GM10248 (cell line): ENCODE measurements at regions of chr6 and their contacts with region 1.

Region 1: DNA sequence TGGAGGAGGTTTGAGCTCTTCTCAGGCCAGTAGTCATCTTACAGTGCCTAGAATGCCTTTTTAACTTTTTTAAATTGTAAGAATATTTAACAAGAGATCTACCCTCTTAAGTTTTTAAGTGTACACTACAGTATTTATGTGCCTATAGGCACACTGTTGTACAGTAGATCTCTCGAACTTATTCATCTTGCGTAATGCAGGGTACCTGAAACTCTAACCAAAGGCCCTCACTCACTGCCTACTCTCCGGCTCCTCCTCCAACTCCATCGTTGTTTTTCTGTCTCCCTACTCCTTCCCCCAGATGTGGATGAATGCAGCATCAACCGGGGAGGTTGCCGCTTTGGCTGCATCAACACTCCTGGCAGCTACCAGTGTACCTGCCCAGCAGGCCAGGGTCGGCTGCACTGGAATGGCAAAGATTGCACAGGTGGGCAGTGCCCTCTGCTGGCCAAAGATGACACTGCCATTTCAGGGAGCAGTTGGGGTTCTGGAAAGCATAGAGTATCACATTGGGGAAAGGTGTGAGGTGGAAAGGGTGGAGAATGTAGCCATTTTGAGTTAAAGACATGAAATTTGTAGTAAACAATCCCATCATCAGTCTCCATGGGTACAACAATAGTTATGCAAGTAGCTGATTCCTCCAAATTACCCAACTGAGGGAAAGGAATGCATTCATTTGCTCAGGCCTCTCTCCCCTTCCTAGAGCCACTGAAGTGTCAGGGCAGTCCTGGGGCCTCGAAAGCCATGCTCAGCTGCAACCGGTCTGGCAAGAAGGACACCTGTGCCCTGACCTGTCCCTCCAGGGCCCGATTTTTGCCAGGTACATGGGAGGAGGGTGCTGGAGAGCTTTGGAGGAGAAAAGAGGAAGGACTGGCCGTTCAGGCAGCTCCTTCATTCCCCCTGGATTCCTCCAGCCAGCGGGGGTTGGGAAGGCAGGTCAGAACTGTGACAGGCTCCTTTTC is 18.4 kb upstream of the ZNF76 start:
- DNase-seq: peak; percentile 86
- CTCF ChIP-seq: peak; percentile 99

Region 2: DNA sequence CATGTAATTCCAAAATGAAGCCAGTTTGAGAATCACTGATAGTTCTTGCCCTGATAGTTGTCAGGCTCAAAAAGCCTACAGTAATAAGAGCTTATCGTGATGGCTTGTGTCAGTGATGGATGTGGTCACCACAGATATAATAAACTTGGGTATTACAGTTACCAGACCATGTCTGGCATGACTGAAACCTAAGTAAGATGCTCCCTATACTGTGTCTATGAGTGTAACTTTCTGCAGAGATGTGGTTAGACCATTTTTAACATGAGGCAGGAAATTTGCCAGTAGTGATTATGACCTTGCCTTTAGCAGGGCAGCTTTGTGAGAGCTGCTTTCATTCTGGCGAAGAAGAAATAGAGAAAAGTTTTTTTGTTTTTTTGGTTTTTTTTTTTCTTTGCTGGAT is 261.9 kb before region 1 on chr6:
- CTCF ChIA-PET with region 1: interaction called, 73 read pairs
- POLR2A ChIA-PET with region 1: no interaction called
- DNase-seq: no peak
- CTCF ChIP-seq: no peak

Region 3: DNA sequence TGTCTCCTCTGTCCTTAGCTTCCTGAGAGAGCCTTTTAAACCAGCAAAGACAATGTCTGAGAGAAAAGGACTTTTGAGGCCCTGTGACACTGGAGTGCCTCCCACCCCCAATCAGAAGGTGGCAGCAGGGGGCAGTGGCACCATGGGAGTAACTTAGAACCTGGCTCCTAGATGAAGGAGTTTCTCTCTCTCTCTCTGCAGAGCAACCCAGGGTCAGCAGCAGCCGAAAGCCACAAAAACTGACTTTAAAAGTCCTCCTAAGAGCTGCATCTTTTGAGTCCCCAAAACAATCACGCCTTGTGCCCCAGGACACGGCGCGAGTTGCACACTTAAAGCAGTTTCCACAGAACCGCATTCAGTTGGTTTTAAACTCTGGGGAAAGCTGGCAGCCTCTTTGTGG is 94.7 kb before region 1 on chr6:
- CTCF ChIA-PET with region 1: interaction called, 34 read pairs
- POLR2A ChIA-PET with region 1: no interaction called
- DNase-seq: no peak
- CTCF ChIP-seq: peak; percentile 34

Region 4: DNA sequence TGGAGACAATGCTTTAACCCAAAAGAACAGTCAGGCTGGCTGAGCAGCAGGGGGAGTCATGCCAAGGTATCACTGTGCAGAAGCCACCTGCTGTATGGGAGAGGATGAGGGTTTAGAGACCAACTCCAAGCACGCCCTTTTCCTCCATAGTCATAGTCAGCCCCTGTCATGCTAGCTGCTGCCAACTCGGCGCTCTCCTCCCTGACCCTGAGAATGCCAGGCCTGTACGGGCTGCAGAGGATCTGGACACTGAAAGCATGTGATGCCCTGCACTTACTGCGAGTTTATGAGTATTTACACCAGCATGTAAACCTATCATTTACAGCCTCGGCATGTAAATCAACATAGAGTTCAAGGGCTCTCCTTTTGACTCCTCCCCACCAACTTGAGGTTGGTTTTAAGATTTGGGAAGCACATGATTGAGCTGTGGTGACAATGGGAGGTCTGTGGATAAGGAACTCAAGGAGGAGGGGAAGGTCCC is 39.0 kb before region 1 on chr6:
- CTCF ChIA-PET with region 1: interaction called, 38 read pairs
- POLR2A ChIA-PET with region 1: no interaction called
- DNase-seq: no peak
- CTCF ChIP-seq: no peak

Region 5: DNA sequence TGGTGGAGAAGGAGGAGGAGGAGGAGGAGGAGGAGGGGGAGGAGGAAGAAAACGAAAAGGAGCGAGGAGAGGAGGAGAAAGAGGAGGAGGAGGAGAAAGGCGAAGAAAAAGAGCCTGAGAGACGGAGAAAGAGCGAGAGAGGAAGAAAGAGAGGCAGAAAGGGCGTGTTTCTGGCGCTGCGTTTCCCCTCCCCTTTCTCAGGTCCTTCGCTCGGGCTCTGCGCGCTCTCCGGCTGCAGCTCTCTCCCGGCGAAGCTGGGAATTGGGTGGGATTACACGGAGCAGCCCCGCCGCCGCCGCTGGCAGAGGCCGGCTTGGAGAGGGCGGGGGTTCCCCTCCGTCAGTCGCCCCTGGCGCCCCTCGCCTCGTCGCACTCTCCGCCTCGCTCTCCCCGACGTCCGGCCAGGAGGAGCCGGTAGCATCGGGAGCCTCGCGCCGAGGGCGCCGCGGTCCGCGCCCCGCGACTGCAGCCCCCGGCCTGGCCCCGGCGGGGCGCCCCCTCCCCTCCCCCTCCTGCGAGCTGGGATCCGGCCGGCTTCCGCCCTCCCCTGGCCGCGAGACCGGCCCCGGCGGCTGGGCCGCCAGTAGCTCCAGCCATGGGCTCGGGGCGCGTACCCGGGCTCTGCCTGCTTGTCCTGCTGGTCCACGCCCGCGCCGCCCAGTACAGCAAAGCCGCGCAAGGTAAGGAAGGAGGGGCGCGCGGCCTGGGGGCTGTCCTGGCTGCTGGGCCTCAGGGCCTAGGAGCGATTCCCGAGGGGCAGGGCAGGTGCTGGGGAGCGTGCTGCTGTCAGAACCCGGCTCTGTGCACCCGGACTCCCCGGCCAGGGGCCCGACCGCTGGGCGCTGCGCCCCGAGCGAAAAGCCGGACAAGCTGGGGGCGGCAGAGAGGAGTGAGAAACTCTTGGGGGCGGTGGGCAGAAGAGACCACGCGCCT is 27.0 kb before region 1 on chr6 and contains the start of gene SCUBE3:
- CTCF ChIA-PET with region 1: interaction called, 43 read pairs
- POLR2A ChIA-PET with region 1: no interaction called
- DNase-seq: peak; percentile 68
- CTCF ChIP-seq: no peak

Region 6: GRCh38 chr6:35230950-35231349 is 10.2 kb before region 1 on chr6:
- CTCF ChIA-PET with region 1: interaction called, 79 read pairs
- POLR2A ChIA-PET with region 1: no interaction called
- DNase-seq: no peak
- CTCF ChIP-seq: no peak

Region 7: DNA sequence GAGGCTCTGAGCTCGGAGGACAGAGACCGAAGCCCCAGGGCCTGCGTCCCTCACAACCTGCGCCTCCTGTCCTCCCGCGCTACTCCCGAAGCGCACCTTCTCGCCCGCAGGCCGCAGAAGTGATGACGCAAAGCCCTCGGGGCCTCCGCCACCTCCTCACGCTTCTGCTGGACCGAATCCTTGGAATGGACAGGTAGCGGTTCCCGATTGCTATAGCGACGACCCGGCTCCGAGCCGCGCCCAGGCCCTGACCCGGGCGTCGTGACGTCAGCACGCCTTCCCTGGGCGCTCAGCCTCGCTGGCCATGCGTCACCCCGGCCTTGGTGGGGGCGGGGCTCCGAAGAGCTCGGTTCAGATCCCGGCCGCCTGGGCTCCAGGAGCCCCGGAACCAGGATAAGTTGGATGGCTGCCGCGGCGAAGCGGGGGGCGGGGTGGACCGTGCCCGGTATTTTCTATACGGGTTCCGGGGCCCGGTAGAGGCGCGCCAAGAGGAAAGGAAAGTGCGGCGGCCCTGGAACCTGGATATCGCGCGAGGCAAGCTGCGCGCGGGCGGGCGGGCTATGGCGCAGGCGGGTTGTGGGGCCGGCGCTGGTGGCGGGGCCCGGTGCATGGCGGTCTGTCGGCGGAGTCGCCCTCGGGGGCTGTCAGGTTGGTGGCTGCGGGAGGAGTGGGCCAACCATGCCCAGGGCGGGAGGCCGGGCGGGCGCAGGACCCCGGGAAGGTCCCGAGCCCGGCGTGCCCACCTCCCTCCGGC is 18.2 kb after region 1 on chr6 and contains the start of gene ZNF76:
- CTCF ChIA-PET with region 1: interaction called, 63 read pairs
- POLR2A ChIA-PET with region 1: no interaction called
- DNase-seq: peak; percentile 98
- CTCF ChIP-seq: peak; percentile 56

Region 8: GRCh38 chr6:35280903-35281302 is 39.8 kb after region 1 on chr6:
- CTCF ChIA-PET with region 1: no interaction called
- POLR2A ChIA-PET with region 1: no interaction called
- DNase-seq: no peak
- CTCF ChIP-seq: no peak